ENCODE measurements at regions of chr11 and their contacts with region 1.

Region 1: GRCh38 chr11:113896156-113896879 is 8.3 kb upstream of the HTR3B start:
- DNase-seq: peak in 23 of 35 experiments; percentile 10 to 64 (median 28)
- ATAC-seq: peak in 3 of 4 experiments; percentile 50 to 61 (median 55)
- H3K4me3 ChIP-seq: no peak overlapping the region
- H3K4me3 Mint-ChIP-seq: no peak overlapping the region
- H3K27ac ChIP-seq: no peak overlapping the region
- H3K27ac Mint-ChIP-seq: no peak overlapping the region
- H3K4me1 ChIP-seq: no peaks in the 10 kb centered on the region
- H3K4me1 Mint-ChIP-seq: peaks cover 0 to 2% (median 0%) of the 10 kb centered on the region in 3 donors
- H3K27me3 ChIP-seq: no peaks in the 10 kb centered on the region
- H3K27me3 Mint-ChIP-seq: no peaks in the 10 kb centered on the region

Region 2: DNA sequence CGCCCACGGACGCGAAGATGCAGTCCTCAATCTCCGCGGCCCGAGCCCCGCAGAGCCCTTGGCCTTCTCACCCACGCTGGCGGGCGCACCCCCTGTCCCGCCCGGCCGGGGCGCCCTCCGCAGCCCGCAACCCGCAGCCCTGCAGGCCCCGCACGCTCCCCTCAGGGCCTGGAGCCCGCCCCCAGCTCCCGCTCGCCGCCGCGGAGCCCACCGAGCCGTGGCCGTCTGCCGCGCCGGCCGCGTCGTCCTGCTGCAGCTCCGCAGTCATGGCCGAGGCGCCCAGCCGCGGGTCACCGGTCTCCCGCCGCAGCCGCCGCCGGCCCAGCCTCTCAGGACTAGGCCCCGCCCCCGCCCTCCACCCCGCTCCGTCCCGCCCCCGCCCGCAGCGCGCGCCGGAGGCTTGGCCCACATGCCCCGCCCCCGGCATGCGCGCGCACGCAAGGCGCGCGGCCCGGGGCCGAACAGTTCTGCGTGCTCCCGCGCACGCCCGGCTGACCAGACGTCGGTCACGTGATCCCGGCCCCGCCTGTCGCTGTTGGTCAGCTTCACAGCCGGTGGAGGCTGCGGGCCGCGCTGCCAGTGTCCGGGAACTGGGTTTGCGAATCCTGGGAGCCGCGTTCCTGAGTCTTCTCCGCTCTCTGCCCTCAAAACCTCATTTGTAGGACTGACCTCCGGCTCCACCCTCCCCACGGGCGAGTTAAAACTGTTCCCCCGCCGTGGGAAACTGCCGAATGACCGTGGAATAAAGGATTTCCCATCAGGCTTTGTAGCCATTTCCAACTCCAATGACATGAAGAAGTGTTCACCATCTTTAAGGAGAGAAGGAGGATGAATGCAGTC is 20.9 kb before region 1 on chr11 and contains the start of gene USP28:
- CTCF ChIA-PET with region 1: interaction called in 1 of 2 experiments, 11 read pairs
- POLR2A ChIA-PET with region 1: no interaction called
- DNase-seq: peak; percentile 27 to 87 (median 63)
- ATAC-seq: peak; percentile 85 to 91 (median 89)
- H3K4me3 ChIP-seq: peak within 1 kb of the TSS; percentile 89 to 90
- H3K4me3 Mint-ChIP-seq: peak within 1 kb of the TSS; percentile 97 to 99 (median 98)
- H3K27ac ChIP-seq: peak within 1 kb of the TSS; percentile 90
- H3K27ac Mint-ChIP-seq: peak within 1 kb of the TSS; percentile 98 to 99
- H3K4me1 ChIP-seq: peaks cover 4 to 37% of the 10 kb centered on the region in 2 experiments
- H3K4me1 Mint-ChIP-seq: peaks cover 39 to 54% (median 48%) of the 10 kb centered on the region in 3 donors
- H3K27me3 ChIP-seq: no peaks in the 10 kb centered on the region
- H3K27me3 Mint-ChIP-seq: no peaks in the 10 kb centered on the region
- total RNA-seq, gene USP28: 16.8 to 28.5 (median 22.9) TPM

Region 3: GRCh38 chr11:114026355-114026754 is 130.0 kb after region 1 on chr11:
- CTCF ChIA-PET with region 1: no interaction called
- POLR2A ChIA-PET with region 1: no interaction called
- DNase-seq: peak in 27 of 35 experiments; percentile 5 to 59 (median 17)
- ATAC-seq: peak in 3 of 4 experiments; percentile 63 to 78 (median 65)
- H3K4me3 ChIP-seq: no peak overlapping the region
- H3K4me3 Mint-ChIP-seq: no peak overlapping the region
- H3K27ac ChIP-seq: no peak overlapping the region
- H3K27ac Mint-ChIP-seq: no peak overlapping the region
- H3K4me1 ChIP-seq: peaks cover 0 to 5% of the 10 kb centered on the region in 2 experiments
- H3K4me1 Mint-ChIP-seq: peaks cover 5 to 7% (median 6%) of the 10 kb centered on the region in 3 donors
- H3K27me3 ChIP-seq: peaks cover 0 to 14% of the 10 kb centered on the region in 2 experiments
- H3K27me3 Mint-ChIP-seq: peaks cover 10 to 21% of the 10 kb centered on the region in 2 donors

Region 4: DNA sequence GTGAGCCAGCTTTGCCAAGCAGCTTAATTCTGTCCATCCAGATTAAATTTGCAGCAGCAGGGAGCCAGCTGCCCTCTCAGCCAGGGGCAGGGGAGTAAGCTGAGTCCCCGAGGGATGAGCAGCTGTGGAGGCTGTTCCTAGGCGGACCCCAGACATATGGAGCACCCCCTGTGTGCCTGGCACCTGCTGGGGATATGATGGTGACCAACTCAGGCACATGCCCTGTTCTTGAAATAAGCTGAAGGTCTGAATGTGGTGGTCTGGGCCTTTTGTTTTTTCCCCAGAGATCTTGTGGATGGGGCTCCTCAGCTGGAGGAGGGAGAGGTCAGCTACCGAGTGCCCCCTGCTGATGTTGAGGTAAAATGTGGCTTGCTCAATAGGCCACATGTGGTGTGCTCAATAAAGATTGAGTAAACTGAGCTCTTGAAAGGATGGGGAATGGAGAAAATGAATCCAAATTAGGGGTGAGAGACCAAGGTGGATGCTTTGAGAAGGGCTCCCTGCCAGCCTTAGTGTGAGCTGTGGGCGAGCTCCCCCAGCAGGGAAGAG is 296.6 kb after region 1 on chr11:
- CTCF ChIA-PET with region 1: interaction called in 1 of 2 experiments, 10 read pairs
- POLR2A ChIA-PET with region 1: no interaction called
- DNase-seq: no peak
- ATAC-seq: peak in 1 of 4 experiments; percentile 35
- H3K4me3 ChIP-seq: no peak overlapping the region
- H3K4me3 Mint-ChIP-seq: no peak overlapping the region
- H3K27ac ChIP-seq: no peak overlapping the region
- H3K27ac Mint-ChIP-seq: no peak overlapping the region
- H3K4me1 ChIP-seq: peaks cover 0 to 5% of the 10 kb centered on the region in 2 experiments
- H3K4me1 Mint-ChIP-seq: peaks cover 23 to 44% (median 33%) of the 10 kb centered on the region in 3 donors
- H3K27me3 ChIP-seq: no peaks in the 10 kb centered on the region
- H3K27me3 Mint-ChIP-seq: no peaks in the 10 kb centered on the region

Region 5: GRCh38 chr11:114262681-114263512 is 366.6 kb after region 1 on chr11:
- CTCF ChIA-PET with region 1: interaction called, 61 to 66 read pairs
- POLR2A ChIA-PET with region 1: no interaction called
- DNase-seq: peak in 9 of 35 experiments; percentile 8 to 51 (median 17)
- ATAC-seq: peak in 3 of 4 experiments; percentile 38 to 71 (median 41)
- H3K4me3 ChIP-seq: no peak overlapping the region
- H3K4me3 Mint-ChIP-seq: no peak overlapping the region
- H3K27ac ChIP-seq: no peak overlapping the region
- H3K27ac Mint-ChIP-seq: no peak overlapping the region
- H3K4me1 ChIP-seq: peaks cover 0 to 4% of the 10 kb centered on the region in 2 experiments
- H3K4me1 Mint-ChIP-seq: peaks cover 0 to 13% (median 2%) of the 10 kb centered on the region in 3 donors
- H3K27me3 ChIP-seq: peaks cover under 1 to 2% of the 10 kb centered on the region in 2 experiments
- H3K27me3 Mint-ChIP-seq: peaks cover 0 to 2% of the 10 kb centered on the region in 2 donors

Region 6: GRCh38 chr11:114340311-114341131 is 444.2 kb after region 1 on chr11:
- CTCF ChIA-PET with region 1: interaction called in 1 of 2 experiments, 11 read pairs
- POLR2A ChIA-PET with region 1: no interaction called
- DNase-seq: peak in 17 of 35 experiments; percentile 7 to 65 (median 18)
- ATAC-seq: peak; percentile 62 to 73 (median 68)
- H3K4me3 ChIP-seq: peak overlapping the region in 1 of 2 donors; percentile 32
- H3K4me3 Mint-ChIP-seq: peak overlapping the region; percentile 50 to 62 (median 52)
- H3K27ac ChIP-seq: no peak overlapping the region
- H3K27ac Mint-ChIP-seq: no peak overlapping the region
- H3K4me1 ChIP-seq: peaks cover 0 to 7% of the 10 kb centered on the region in 2 experiments
- H3K4me1 Mint-ChIP-seq: peaks cover 0 to 12% (median 11%) of the 10 kb centered on the region in 3 donors
- H3K27me3 ChIP-seq: peaks cover 0 to 7% of the 10 kb centered on the region in 2 experiments
- H3K27me3 Mint-ChIP-seq: no peaks in the 10 kb centered on the region